Right ventricle myocardium inferior (tissue), 1 donor: ENCODE measurements at regions of chr2 and their contacts with region 1.

Region 1: DNA sequence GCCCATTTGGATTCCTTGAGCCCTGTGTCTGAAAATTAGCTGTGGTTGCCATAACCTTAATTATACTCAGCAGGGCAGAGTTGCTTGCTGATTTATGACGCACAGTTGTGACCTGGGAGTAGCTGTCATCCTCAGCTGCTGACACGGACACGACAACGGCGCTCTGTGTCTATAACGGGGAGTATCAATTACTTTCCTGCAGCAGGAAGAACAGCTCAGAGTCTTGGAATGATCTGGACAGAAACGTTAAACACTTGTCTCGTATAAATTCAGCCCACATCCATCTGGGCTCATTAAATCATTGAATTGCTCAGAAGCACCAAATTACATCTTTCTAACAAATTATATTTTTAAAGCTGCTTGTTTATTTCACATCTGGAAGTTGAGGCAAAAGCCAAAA is 116.3 kb downstream of the SEPTIN10 start:
- DNase-seq: no peak
- ATAC-seq: no peak

Region 2: DNA sequence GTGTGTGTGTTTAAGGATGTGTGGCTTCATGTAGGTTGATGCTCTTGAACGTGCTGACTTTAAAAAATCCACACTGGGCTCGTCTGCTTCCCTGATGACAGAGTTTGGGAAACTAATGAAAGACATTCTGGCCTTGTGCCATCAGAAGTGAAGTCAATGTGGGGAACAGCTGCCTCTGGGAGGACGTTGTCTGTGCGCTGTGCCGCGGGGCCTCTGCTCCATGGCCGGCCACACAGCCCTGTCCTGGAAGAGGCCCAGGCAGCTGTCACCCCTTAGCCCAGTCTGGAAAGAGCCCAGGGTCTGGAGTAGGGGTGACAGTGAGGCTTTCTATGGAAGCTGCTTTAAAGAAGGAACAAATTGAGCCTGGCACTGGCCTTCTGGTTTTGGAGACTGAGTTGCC is 212.6 kb before region 1 on chr2:
- intact Hi-C with region 1: loop called (anchors 5 kb)
- DNase-seq: peak; percentile 81
- ATAC-seq: peak; percentile 87

Region 3: GRCh38 chr2:109447251-109447661 is 50.2 kb before region 1 on chr2:
- intact Hi-C with region 1: loop called (anchors 2 kb)
- DNase-seq: no peak
- ATAC-seq: no peak

Region 4: GRCh38 chr2:110713513-110714362 is 1216.3 kb after region 1 on chr2:
- intact Hi-C with region 1: no loop called
- DNase-seq: no peak
- ATAC-seq: no peak